B cell (primary cell): ENCODE measurements at regions of chr19 and their contacts with region 1.

Region 1: DNA sequence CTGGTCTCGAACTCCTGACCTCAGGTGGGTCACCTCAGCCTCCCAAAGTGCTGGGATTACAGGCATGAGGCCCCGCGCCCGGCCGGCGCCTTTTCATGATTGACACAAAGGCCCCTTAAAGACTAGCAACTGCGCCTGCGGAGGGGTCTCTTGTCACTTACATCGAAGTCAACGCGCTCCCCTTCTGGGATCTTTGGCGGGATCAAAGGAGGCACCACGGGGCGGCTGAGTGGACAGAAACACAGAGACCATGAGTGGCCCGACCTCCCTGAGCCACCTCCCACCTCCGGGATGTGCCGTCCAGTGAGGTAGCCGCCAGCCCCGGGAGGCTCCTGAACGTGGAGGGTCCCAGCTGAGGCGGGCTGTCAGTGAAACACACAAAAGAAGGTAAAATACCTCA is 7.3 kb downstream of the TNNT1 start:
- DNase-seq: no peak
- ATAC-seq: no peak
- H3K4me3 ChIP-seq: peak overlapping the region in 1 of 5 experiments; percentile 24
- H3K4me3 Mint-ChIP-seq: no peak overlapping the region
- H3K27ac ChIP-seq: no peak overlapping the region
- H3K27ac Mint-ChIP-seq: no peak overlapping the region
- H3K4me1 ChIP-seq: peaks cover 19 to 20% of the 10 kb centered on the region in 2 donors
- H3K4me1 Mint-ChIP-seq: peaks cover 7% of the 10 kb centered on the region
- H3K27me3 ChIP-seq: peaks cover 0 to 80% (median 26%) of the 10 kb centered on the region in 4 experiments
- H3K27me3 Mint-ChIP-seq: peaks cover 36% of the 10 kb centered on the region
- CTCF ChIP-seq: no peak

Region 2: GRCh38 chr19:55041617-55042349 is 99.9 kb before region 1 on chr19:
- CTCF ChIA-PET with region 1: no interaction called
- POLR2A ChIA-PET with region 1: no interaction called
- intact Hi-C with region 1: no loop called
- DNase-seq: no peak
- ATAC-seq: no peak
- H3K4me3 ChIP-seq: no peak overlapping the region
- H3K4me3 Mint-ChIP-seq: no peak overlapping the region
- H3K27ac ChIP-seq: no peak overlapping the region
- H3K27ac Mint-ChIP-seq: no peak overlapping the region
- H3K4me1 ChIP-seq: peaks cover 6 to 8% of the 10 kb centered on the region in 2 donors
- H3K4me1 Mint-ChIP-seq: peaks cover 8% of the 10 kb centered on the region
- H3K27me3 ChIP-seq: no peaks in the 10 kb centered on the region
- H3K27me3 Mint-ChIP-seq: no peaks in the 10 kb centered on the region
- CTCF ChIP-seq: no peak

Region 3: GRCh38 chr19:55160128-55160985 is 18.7 kb after region 1 on chr19:
- CTCF ChIA-PET with region 1: interaction called, 18 read pairs
- POLR2A ChIA-PET with region 1: no interaction called
- intact Hi-C with region 1: no loop called
- DNase-seq: peak; percentile 86
- ATAC-seq: peak; percentile 84
- H3K4me3 ChIP-seq: peak overlapping the region in 1 of 5 experiments; percentile 19
- H3K4me3 Mint-ChIP-seq: no peak overlapping the region
- H3K27ac ChIP-seq: no peak overlapping the region
- H3K27ac Mint-ChIP-seq: no peak overlapping the region
- H3K4me1 ChIP-seq: peaks cover 14 to 19% of the 10 kb centered on the region in 2 donors
- H3K4me1 Mint-ChIP-seq: peaks cover 10% of the 10 kb centered on the region
- H3K27me3 ChIP-seq: peaks cover 0 to 71% (median 25%) of the 10 kb centered on the region in 4 experiments
- H3K27me3 Mint-ChIP-seq: peaks cover 49% of the 10 kb centered on the region
- CTCF ChIP-seq: peak; percentile 86

Region 4: DNA sequence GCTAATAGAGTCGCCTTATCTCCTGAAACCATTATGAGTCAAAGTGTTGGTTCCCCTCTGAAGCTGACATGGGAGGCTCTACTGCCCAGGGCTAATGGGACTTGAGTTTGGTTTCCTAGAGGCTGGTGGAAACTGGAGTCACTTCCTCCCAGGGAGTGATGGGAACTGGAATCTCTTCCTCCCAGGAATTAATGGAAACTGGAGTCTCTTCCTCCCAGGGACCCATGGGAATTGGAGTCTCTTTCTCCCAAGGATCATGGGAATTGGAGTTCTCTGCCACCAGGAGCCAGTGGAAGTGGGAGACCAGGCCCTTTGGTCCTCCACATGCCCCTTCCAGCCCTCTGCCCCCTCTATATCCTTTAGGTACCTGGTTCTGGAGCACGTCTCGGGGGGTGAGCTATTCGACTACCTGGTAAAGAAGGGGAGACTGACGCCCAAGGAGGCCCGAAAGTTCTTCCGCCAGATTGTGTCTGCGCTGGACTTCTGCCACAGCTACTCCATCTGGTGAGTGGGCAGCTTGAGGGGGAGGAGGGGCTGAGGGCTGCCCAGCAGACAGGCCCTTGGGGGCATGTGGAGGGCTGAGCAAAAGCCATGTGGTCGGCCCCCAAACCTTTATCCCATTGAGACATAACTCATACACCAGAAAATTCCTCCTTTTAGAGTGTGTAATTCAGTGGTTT is 147.6 kb after region 1 on chr19:
- CTCF ChIA-PET with region 1: interaction called, 14 read pairs
- POLR2A ChIA-PET with region 1: no interaction called
- intact Hi-C with region 1: loop called (anchors 5 kb)
- DNase-seq: no peak
- ATAC-seq: no peak
- H3K4me3 ChIP-seq: no peak overlapping the region
- H3K4me3 Mint-ChIP-seq: no peak overlapping the region
- H3K27ac ChIP-seq: no peak overlapping the region
- H3K27ac Mint-ChIP-seq: no peak overlapping the region
- H3K4me1 ChIP-seq: peaks cover 4 to 6% of the 10 kb centered on the region in 2 donors
- H3K4me1 Mint-ChIP-seq: peaks cover 5% of the 10 kb centered on the region
- H3K27me3 ChIP-seq: no peaks in the 10 kb centered on the region
- H3K27me3 Mint-ChIP-seq: no peaks in the 10 kb centered on the region
- CTCF ChIP-seq: no peak

Region 5: GRCh38 chr19:55301459-55302317 is 160.0 kb after region 1 on chr19:
- CTCF ChIA-PET with region 1: interaction called, 10 read pairs
- POLR2A ChIA-PET with region 1: no interaction called
- intact Hi-C with region 1: no loop called
- DNase-seq: peak; percentile 95
- ATAC-seq: peak; percentile 91
- H3K4me3 ChIP-seq: peak overlapping the region in 4 of 5 experiments; percentile 35 to 53 (median 49)
- H3K4me3 Mint-ChIP-seq: peak overlapping the region; percentile 90
- H3K27ac ChIP-seq: peak overlapping the region; percentile 25 to 64
- H3K27ac Mint-ChIP-seq: peak overlapping the region; percentile 87
- H3K4me1 ChIP-seq: peaks cover 8 to 15% of the 10 kb centered on the region in 2 donors
- H3K4me1 Mint-ChIP-seq: peaks cover 12% of the 10 kb centered on the region
- H3K27me3 ChIP-seq: no peaks in the 10 kb centered on the region
- H3K27me3 Mint-ChIP-seq: peaks cover 6% of the 10 kb centered on the region
- CTCF ChIP-seq: peak; percentile 92

Region 6: GRCh38 chr19:55385740-55386529 is 244.2 kb after region 1 on chr19 and contains the start of gene RPL28:
- CTCF ChIA-PET with region 1: interaction called, 39 read pairs
- POLR2A ChIA-PET with region 1: interaction called, 11 read pairs
- intact Hi-C with region 1: no loop called
- DNase-seq: peak; percentile 99
- ATAC-seq: peak; percentile 81
- H3K4me3 ChIP-seq: peak within 1 kb of the TSS; percentile 85 to 99 (median 97)
- H3K4me3 Mint-ChIP-seq: peak within 1 kb of the TSS; percentile 100
- H3K27ac ChIP-seq: peak within 1 kb of the TSS; percentile 96
- H3K27ac Mint-ChIP-seq: peak within 1 kb of the TSS; percentile 100
- H3K4me1 ChIP-seq: peaks cover 40 to 57% of the 10 kb centered on the region in 2 donors
- H3K4me1 Mint-ChIP-seq: peaks cover 68% of the 10 kb centered on the region
- H3K27me3 ChIP-seq: no peaks in the 10 kb centered on the region
- H3K27me3 Mint-ChIP-seq: no peaks in the 10 kb centered on the region
- CTCF ChIP-seq: no peak
- total RNA-seq, gene RPL28: 2,397 and 2,578 TPM in 2 replicates

Region 7: DNA sequence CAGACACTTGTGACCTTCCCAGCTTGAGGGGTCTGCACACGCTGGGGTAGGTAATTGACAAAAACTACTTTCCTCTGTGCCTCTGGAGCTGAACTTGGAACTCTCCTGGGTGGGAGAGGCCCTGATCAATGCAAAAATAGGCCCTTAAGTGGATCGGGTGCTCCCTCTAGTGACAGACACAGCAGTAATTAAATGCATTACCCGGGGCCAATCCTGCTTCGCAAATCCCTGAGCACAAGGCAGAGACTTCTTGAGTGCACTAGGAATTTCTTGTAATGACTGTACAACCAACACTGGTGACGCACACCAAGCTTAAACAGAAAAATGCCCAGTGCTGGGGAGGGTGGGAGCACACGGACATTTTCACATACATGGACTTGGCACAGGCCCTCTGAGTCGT is 276.5 kb after region 1 on chr19:
- CTCF ChIA-PET with region 1: interaction called, 75 read pairs
- POLR2A ChIA-PET with region 1: no interaction called
- intact Hi-C with region 1: no loop called
- DNase-seq: peak; percentile 73
- ATAC-seq: peak; percentile 56
- H3K4me3 ChIP-seq: no peak overlapping the region
- H3K4me3 Mint-ChIP-seq: no peak overlapping the region
- H3K27ac ChIP-seq: no peak overlapping the region
- H3K27ac Mint-ChIP-seq: no peak overlapping the region
- H3K4me1 ChIP-seq: no peaks in the 10 kb centered on the region
- H3K4me1 Mint-ChIP-seq: no peaks in the 10 kb centered on the region
- H3K27me3 ChIP-seq: peaks cover 0 to 18% (median 0%) of the 10 kb centered on the region in 4 experiments
- H3K27me3 Mint-ChIP-seq: peaks cover 19% of the 10 kb centered on the region
- CTCF ChIP-seq: peak; percentile 68

Region 8: GRCh38 chr19:55605207-55605636 is 463.5 kb after region 1 on chr19:
- CTCF ChIA-PET with region 1: interaction called, 10 read pairs
- POLR2A ChIA-PET with region 1: no interaction called
- intact Hi-C with region 1: no loop called
- DNase-seq: peak; percentile 97
- ATAC-seq: peak; percentile 76
- H3K4me3 ChIP-seq: peak overlapping the region; percentile 43 to 84 (median 70)
- H3K4me3 Mint-ChIP-seq: peak overlapping the region; percentile 86
- H3K27ac ChIP-seq: peak overlapping the region; percentile 74 to 85
- H3K27ac Mint-ChIP-seq: peak overlapping the region; percentile 94
- H3K4me1 ChIP-seq: peaks cover 17 to 35% of the 10 kb centered on the region in 2 donors
- H3K4me1 Mint-ChIP-seq: peaks cover 56% of the 10 kb centered on the region
- H3K27me3 ChIP-seq: no peaks in the 10 kb centered on the region
- H3K27me3 Mint-ChIP-seq: no peaks in the 10 kb centered on the region
- CTCF ChIP-seq: no peak